ENCODE measurements at regions of chr2 and their contacts with region 1.

Region 1: GRCh38 chr2:190534310-190535120 is at the start of gene NEMP2:
- DNase-seq: peak; percentile 28 to 91 (median 78)

Region 2: DNA sequence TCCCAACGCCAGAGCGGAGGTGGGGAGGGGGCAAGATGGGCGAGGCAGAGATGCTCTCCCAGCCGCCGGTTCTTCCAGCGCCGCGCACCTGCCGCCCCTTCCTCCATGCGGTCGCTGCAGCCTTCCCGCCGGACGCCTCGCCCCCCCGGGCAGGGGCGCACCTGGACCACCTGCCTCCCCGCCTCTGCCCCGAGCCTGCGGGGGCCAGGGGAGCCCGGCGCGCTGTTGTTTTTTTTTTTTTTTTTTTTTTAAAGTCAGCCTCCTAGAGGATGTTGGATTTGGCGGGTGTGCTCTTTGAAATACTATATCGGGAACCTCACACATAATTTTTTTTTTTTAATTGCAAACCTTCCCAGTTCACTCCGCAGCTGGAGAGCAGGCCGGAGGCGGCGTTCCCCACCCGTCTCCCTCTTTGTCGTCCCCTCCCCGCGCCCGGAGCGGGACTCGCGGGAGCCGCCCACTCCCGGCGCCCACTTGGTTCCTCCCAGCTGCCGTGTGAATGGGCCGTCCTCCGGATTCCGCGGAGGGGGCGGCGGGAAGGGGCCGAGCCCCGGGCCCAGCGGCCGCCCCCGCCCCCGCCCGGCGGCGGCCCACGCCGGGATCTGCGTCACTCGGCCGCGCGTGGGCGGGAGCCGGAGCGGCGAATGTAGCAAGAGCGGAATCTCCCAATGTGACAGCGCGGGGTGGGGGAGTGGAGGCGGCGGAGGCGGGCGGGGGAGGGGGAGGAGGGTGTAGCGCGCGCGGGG is 113.9 kb after region 1 on chr2:
- intact Hi-C with region 1: loop called (anchors 2 kb)
- DNase-seq: peak; percentile 75 to 97 (median 92)